Caco-2 (cell line): ENCODE measurements at regions of chr1 and their contacts with region 1.

Region 1: DNA sequence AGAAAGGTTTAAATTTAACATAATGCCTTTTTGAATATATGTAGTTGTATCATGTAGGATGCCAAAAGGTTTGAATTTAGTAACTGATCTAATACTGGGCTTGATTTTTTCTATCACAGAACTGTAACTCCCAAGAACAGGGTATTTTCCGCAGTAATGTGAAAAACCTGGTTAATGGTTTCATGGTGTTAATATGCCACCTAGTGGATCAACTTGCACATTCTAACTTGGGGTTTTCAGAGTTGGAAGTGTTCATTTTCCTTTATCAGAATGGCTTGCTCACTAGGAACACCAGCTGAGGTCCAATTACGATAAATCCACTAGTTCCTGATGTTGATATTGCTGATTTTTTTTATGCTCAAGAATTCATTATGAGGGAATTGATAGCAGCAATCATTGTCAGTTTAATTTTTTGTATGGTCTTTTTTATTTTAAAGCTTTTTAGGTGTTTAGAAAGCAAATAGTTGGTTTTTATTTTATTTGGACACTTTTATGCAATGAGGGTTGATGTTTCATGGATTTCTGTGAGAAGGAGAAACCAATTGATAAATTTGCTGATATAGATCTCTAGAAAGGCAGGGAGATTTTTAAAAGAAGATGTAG is 157.2 kb downstream of the PLA2G4A start:
- DNase-seq: peak in 1 of 2 experiments; percentile 53
- H3K4me3 ChIP-seq: no peak overlapping the region
- H3K4me3 Mint-ChIP-seq: no peak overlapping the region
- H3K27ac Mint-ChIP-seq: no peak overlapping the region
- H3K4me1 ChIP-seq: peaks cover 6% of the 10 kb centered on the region; the same call in 1 of the 2 replicates
- H3K4me1 Mint-ChIP-seq: no peaks in the 10 kb centered on the region
- H3K27me3 ChIP-seq: no peaks in the 10 kb centered on the region
- H3K27me3 Mint-ChIP-seq: no peaks in the 10 kb centered on the region
- CTCF ChIP-seq: peak; percentile 55 to 66

Region 2: GRCh38 chr1:186375088-186375953 is 610.7 kb before region 1 on chr1 and contains the starts of genes ODR4 and TPR:
- CTCF ChIA-PET with region 1: interaction called, 6 read pairs
- POLR2A ChIA-PET with region 1: no interaction called
- intact Hi-C with region 1: loop called (anchors 1 kb)
- DNase-seq: peak; percentile 97 to 99
- H3K4me3 ChIP-seq: peak within 1 kb of the TSS; percentile 78
- H3K4me3 Mint-ChIP-seq: peak within 1 kb of the TSS; percentile 98
- H3K27ac Mint-ChIP-seq: peak within 1 kb of the TSS; percentile 100
- H3K4me1 ChIP-seq: no peaks in the 10 kb centered on the region
- H3K4me1 Mint-ChIP-seq: no peaks in the 10 kb centered on the region
- H3K27me3 ChIP-seq: no peaks in the 10 kb centered on the region
- H3K27me3 Mint-ChIP-seq: no peaks in the 10 kb centered on the region
- CTCF ChIP-seq: peak; percentile 86 to 90
- total RNA-seq, gene ODR4: 29.1 and 32.0 TPM in 2 replicates
- total RNA-seq, gene TPR: 172 and 178 TPM in 2 replicates

Region 3: GRCh38 chr1:186474208-186474607 is 511.8 kb before region 1 on chr1:
- CTCF ChIA-PET with region 1: no interaction called
- POLR2A ChIA-PET with region 1: no interaction called
- intact Hi-C with region 1: loop called (anchors 2 kb)
- DNase-seq: no peak
- H3K4me3 ChIP-seq: no peak overlapping the region
- H3K4me3 Mint-ChIP-seq: no peak overlapping the region
- H3K27ac Mint-ChIP-seq: no peak overlapping the region
- H3K4me1 ChIP-seq: peaks cover 11% of the 10 kb centered on the region; the same call in 1 of the 2 replicates
- H3K4me1 Mint-ChIP-seq: peaks cover 24% of the 10 kb centered on the region
- H3K27me3 ChIP-seq: no peaks in the 10 kb centered on the region
- H3K27me3 Mint-ChIP-seq: no peaks in the 10 kb centered on the region
- CTCF ChIP-seq: no peak

Region 4: DNA sequence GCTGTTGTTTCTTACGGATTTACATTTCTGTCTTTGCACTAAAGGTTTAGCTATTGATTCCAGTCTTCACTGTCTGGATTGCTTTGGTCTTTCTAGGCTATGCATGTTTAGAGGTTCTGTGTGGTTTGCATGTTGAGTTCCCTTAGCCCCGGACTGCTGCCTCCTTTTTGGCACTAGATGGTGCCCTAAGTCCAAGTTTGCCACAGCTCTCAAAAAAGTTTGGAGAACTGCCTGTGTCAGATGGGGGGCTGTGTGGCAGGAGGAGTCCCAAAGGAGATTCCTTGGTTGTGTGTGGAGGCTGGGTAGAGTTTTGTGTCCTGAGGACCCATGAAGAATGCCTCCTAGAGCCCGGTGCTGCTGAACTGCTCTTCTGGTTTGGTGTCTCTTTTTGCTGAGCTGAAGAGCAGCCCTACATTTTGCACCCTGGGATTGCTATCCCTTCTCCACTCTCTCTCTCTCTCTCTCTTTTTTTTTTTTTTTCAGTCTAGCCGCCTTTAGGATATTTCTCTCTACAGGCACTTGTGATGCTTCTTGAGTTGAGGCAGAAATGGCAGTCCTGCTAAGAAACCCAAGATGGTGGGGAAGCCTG is 380.1 kb before region 1 on chr1:
- CTCF ChIA-PET with region 1: no interaction called
- POLR2A ChIA-PET with region 1: no interaction called
- intact Hi-C with region 1: loop called (anchors 1 kb)
- DNase-seq: peak; percentile 70 to 72
- H3K4me3 ChIP-seq: no peak overlapping the region
- H3K4me3 Mint-ChIP-seq: no peak overlapping the region
- H3K27ac Mint-ChIP-seq: peak overlapping the region; percentile 43
- H3K4me1 ChIP-seq: peaks cover 16% of the 10 kb centered on the region
- H3K4me1 Mint-ChIP-seq: peaks cover 9% of the 10 kb centered on the region
- H3K27me3 ChIP-seq: no peaks in the 10 kb centered on the region
- H3K27me3 Mint-ChIP-seq: no peaks in the 10 kb centered on the region
- CTCF ChIP-seq: peak; percentile 70 to 71

Region 5: GRCh38 chr1:186722711-186723309 is 263.2 kb before region 1 on chr1:
- CTCF ChIA-PET with region 1: interaction called, 4 read pairs
- POLR2A ChIA-PET with region 1: no interaction called
- intact Hi-C with region 1: loop called (anchors 1 kb)
- DNase-seq: peak; percentile 41 to 62
- H3K4me3 ChIP-seq: no peak overlapping the region
- H3K4me3 Mint-ChIP-seq: no peak overlapping the region
- H3K27ac Mint-ChIP-seq: no peak overlapping the region
- H3K4me1 ChIP-seq: no peaks in the 10 kb centered on the region
- H3K4me1 Mint-ChIP-seq: no peaks in the 10 kb centered on the region
- H3K27me3 ChIP-seq: no peaks in the 10 kb centered on the region
- H3K27me3 Mint-ChIP-seq: no peaks in the 10 kb centered on the region
- CTCF ChIP-seq: peak; percentile 50 to 72

Region 6: DNA sequence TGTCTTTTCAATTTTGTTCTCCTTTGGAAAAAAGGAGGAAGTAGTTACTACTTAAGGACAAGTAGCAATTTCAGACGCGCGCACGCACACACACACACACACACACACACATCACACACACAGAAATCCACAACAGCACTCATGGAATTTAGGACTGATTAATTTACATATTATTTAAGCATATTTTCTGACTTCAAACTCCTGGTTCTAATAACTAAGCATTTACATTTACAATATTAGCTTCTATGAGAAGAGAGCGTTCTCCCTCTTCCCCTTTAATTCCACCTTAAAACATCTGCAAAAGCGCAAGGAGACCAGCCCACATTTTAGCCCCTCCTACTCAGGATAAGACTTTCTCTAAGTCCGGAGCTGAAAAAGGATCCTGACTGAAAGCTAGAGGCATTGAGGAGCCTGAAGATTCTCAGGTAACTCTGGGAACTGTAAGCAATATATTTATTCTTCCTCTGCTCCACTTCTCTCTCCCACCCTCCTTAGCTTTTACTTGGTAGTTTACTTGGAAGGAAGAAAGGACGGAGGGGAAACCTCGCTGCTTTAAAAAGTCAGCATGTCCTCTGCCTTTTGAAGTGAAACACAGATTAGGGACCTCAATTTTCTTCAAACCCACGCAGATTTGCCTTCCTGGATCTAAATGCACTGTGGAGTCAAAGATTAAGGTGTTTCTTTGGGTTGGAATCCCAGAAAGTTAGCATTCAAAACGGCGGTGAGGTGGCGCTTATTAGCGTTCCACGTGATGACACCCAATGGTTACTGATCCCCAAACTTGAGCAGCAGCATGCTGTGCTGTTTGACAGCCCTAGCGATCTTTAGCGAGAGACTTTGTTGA is 157.2 kb before region 1 on chr1 and contains the start of gene PLA2G4A:
- CTCF ChIA-PET with region 1: no interaction called
- POLR2A ChIA-PET with region 1: no interaction called
- intact Hi-C with region 1: loop called (anchors 5 kb)
- DNase-seq: peak; percentile 40 to 44
- H3K4me3 ChIP-seq: peak within 1 kb of the TSS; percentile 46
- H3K4me3 Mint-ChIP-seq: peak within 1 kb of the TSS; percentile 89
- H3K27ac Mint-ChIP-seq: no peak within 1 kb of the TSS
- H3K4me1 ChIP-seq: no peaks in the 10 kb centered on the region
- H3K4me1 Mint-ChIP-seq: peaks cover 6% of the 10 kb centered on the region
- H3K27me3 ChIP-seq: no peaks in the 10 kb centered on the region
- H3K27me3 Mint-ChIP-seq: peaks cover 8% of the 10 kb centered on the region
- CTCF ChIP-seq: no peak
- total RNA-seq, gene PLA2G4A: 2.0 and 3.4 TPM in 2 replicates